ENCODE measurements at regions of chr4 and their contacts with region 1.

Region 1: GRCh38 chr4:184649026-184649970 is at the starts of genes CASP3 and PRIMPOL:
- DNase-seq: peak; percentile 96
- H3K4me3 ChIP-seq: peak within 1 kb of the TSS; percentile 82 to 93
- H3K27ac ChIP-seq: peak within 1 kb of the TSS; percentile 97
- H3K4me1 ChIP-seq: peaks cover 14% of the 10 kb centered on the region
- H3K27me3 ChIP-seq: no peaks in the 10 kb centered on the region
- CTCF ChIP-seq: peak in 1 of 3 experiments; percentile 18
- POLR2A ChIP-seq: no peak
- total RNA-seq, gene CASP3: 12.0 to 12.3 TPM
- total RNA-seq, gene PRIMPOL: 17.6 to 18.8 TPM

Region 2: DNA sequence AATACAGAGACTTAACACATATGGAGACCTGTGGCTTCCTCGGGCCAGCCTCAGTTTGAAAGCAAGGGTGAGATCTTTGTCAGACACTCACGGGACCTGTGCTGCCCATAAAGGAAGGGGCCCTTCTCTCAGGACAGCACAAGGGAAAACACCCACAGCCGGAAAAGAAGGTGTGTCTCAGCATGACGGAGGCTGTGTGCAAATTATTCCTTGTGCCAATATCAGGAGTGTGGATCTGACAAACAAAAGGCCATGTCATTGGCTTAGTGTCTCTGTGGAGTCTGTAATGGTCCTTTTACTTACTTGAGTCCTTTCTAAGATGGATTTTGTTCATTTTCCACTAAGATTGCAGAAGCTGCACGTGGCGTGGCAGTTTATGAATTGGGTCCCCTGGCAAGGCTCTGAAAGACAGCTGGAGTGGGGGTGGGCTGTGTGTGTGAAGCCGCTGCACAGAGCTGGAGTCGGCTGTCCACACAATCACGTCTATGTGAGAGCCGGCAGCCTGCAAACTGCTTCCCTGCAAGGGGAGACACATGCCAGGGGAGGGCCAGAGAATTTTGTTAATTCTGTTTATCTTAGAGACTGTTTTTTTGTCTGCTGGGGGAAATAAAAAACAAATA is 433.5 kb before region 1 on chr4:
- intact Hi-C with region 1: no loop called
- DNase-seq: no peak
- H3K4me3 ChIP-seq: no peak overlapping the region
- H3K27ac ChIP-seq: peak overlapping the region in 1 of 2 donors; percentile 36
- H3K4me1 ChIP-seq: no peaks in the 10 kb centered on the region
- H3K27me3 ChIP-seq: no peaks in the 10 kb centered on the region
- CTCF ChIP-seq: no peak
- POLR2A ChIP-seq: no peak

Region 3: DNA sequence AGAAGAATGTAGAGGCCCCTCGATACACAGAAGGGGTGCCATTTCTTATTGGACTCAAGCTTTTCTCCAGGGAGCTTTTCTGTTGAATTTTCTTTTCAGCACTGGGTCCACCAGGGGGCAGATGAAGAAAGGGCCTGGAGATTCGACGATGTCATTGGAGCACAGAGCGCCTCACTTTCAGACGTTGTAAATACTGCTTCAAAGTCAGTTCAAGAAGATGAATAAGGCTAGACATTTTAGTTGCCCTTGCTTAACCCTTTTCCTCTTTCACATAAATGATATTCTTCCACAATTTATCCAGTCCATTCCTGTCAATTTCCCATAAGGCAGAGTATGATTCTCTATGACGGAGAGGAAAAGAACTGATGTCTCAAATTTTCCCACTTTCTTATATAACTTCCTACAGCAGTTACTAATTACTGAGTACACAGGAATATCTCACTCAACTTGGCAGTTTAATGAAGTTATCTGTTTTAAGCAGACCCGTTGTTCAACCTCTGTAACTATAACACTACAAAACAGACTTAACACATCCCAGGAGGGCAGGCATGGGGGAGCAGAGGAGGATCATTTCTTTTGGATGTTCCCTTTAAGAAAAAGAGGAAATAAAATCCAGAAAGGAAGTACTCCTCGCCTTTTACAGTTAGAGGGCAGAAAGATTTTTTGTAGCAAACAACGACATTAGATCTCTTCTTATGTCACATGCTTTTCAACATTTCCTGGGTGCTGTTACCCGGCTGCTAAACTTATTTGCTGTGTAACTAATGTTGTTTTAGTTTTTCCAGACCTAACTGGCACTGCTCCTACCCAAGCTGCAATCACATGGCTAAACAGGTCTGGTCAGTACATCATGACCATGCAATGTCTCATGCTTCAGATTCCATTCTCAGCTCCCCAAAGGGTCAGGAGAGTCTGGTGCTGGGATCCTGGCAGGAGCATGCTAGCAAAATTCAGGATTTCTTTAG is 96.8 kb after region 1 on chr4:
- intact Hi-C with region 1: loop called (anchors 10 kb)
- DNase-seq: peak; percentile 85
- H3K4me3 ChIP-seq: no peak overlapping the region
- H3K27ac ChIP-seq: peak overlapping the region; percentile 56 to 65
- H3K4me1 ChIP-seq: peaks cover 33% of the 10 kb centered on the region
- H3K27me3 ChIP-seq: no peaks in the 10 kb centered on the region
- CTCF ChIP-seq: peak; percentile 71 to 82 (median 82)
- POLR2A ChIP-seq: no peak